ENCODE measurements at regions of chr2 and their contacts with region 1.

Region 1: GRCh38 chr2:70977605-70978205 is 725 bp upstream of the ANKRD53 start:
- DNase-seq: peak; percentile 66
- H3K4me3 Mint-ChIP-seq: peak overlapping the region; percentile 64
- H3K27ac Mint-ChIP-seq: peak overlapping the region; percentile 59
- H3K4me1 Mint-ChIP-seq: peaks cover 13% of the 10 kb centered on the region
- H3K27me3 Mint-ChIP-seq: no peaks in the 10 kb centered on the region

Region 2: DNA sequence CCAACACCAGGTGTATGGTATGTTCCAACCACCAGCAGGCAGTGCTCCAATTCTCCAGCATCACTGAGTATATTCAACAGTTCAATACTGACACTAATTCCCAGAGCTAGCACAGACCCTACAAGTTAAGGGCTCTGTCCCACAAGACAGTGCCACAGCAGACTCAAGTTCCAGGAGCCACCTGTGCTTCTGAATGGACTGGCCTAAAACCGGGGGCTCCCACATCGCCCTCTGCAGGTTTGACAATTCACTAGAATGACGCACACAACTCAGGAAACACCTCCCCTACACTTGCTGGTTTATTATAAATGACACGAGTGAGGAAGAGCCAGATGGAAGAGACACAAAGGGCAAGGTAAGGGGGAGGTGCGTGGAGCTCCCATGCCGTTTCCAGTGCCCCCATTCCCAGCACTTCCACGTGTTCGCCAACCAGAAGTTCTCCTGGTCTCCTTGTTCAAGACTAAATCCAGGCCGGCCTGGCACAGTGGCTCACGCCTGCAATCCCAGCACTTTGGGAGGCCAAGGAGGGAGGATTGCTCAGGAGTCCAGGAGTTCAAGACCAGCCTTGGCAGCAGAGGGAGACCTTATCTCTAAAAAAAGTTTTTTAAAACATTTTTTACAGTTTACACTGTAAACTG is 54.2 kb before region 1 on chr2:
- CTCF ChIA-PET with region 1: no interaction called
- POLR2A ChIA-PET with region 1: no interaction called
- intact Hi-C with region 1: no loop called
- DNase-seq: peak; percentile 39
- H3K4me3 Mint-ChIP-seq: no peak overlapping the region
- H3K27ac Mint-ChIP-seq: no peak overlapping the region
- H3K4me1 Mint-ChIP-seq: no peaks in the 10 kb centered on the region
- H3K27me3 Mint-ChIP-seq: peaks cover 2% of the 10 kb centered on the region

Region 3: DNA sequence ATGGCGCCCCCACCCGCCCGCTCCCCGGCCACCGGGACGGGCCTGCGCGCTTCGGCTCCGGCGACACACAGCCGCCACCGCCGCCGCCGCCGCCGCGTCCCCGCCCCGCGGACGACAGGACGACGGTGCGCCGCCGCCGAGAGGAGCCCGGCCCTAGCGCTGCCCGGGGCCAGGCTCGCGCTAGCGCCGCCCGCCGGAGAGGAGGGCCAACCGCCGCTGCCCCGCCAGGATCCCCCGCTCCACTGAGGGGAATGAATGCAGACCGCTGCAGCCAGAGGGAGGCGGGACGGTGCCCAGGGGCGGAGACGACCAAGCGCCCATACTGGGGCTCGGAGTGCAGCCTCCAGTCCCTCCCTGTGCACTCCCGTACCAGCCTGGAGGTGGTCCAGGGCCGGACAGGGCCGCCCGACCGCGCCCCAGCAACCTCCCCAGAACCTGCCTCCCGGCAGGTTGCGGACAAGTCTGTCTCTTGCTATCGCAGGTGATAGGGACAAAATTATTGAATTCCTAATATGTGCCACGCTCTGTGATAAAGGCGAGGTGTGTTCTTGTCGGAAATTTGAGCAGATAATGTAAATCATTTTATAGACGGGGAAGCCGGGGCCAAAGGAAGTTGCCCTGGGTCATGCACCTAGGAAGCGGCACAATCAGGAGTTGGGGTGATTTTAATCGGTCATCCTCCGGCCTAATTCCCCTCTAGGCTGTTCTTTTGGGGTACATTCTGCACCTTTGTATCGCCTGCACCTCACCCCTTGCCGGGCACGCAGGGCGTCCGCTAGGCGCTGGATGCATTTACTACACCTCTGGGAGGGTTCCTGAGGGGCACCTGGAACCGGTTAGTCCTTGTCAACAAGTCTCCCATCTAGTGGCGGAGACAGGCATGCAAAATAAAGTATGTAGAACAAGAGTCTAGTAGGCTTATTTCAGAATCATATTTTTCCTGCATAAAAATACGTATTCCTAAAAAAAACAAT is 17.3 kb after region 1 on chr2 and contains the start of gene TEX261:
- CTCF ChIA-PET with region 1: interaction called, 53 read pairs
- POLR2A ChIA-PET with region 1: no interaction called
- intact Hi-C with region 1: loop called (anchors 1 kb)
- DNase-seq: peak; percentile 94
- H3K4me3 Mint-ChIP-seq: peak within 1 kb of the TSS; percentile 93
- H3K27ac Mint-ChIP-seq: peak within 1 kb of the TSS; percentile 91
- H3K4me1 Mint-ChIP-seq: peaks cover 31% of the 10 kb centered on the region
- H3K27me3 Mint-ChIP-seq: no peaks in the 10 kb centered on the region
- total RNA-seq, gene TEX261: 29.0 to 29.9 TPM

Region 4: GRCh38 chr2:71000780-71001591 is 23.3 kb after region 1 on chr2:
- CTCF ChIA-PET with region 1: interaction called, 53 read pairs
- POLR2A ChIA-PET with region 1: no interaction called
- intact Hi-C with region 1: no loop called
- DNase-seq: peak; percentile 89
- H3K4me3 Mint-ChIP-seq: peak overlapping the region; percentile 72
- H3K27ac Mint-ChIP-seq: peak overlapping the region; percentile 74
- H3K4me1 Mint-ChIP-seq: peaks cover 7% of the 10 kb centered on the region
- H3K27me3 Mint-ChIP-seq: peaks cover 2% of the 10 kb centered on the region

Region 5: GRCh38 chr2:71043531-71044407 is 66.1 kb after region 1 on chr2:
- CTCF ChIA-PET with region 1: no interaction called
- POLR2A ChIA-PET with region 1: no interaction called
- intact Hi-C with region 1: no loop called
- DNase-seq: peak; percentile 40
- H3K4me3 Mint-ChIP-seq: no peak overlapping the region
- H3K27ac Mint-ChIP-seq: no peak overlapping the region
- H3K4me1 Mint-ChIP-seq: no peaks in the 10 kb centered on the region
- H3K27me3 Mint-ChIP-seq: peaks cover 11% of the 10 kb centered on the region

Region 6: DNA sequence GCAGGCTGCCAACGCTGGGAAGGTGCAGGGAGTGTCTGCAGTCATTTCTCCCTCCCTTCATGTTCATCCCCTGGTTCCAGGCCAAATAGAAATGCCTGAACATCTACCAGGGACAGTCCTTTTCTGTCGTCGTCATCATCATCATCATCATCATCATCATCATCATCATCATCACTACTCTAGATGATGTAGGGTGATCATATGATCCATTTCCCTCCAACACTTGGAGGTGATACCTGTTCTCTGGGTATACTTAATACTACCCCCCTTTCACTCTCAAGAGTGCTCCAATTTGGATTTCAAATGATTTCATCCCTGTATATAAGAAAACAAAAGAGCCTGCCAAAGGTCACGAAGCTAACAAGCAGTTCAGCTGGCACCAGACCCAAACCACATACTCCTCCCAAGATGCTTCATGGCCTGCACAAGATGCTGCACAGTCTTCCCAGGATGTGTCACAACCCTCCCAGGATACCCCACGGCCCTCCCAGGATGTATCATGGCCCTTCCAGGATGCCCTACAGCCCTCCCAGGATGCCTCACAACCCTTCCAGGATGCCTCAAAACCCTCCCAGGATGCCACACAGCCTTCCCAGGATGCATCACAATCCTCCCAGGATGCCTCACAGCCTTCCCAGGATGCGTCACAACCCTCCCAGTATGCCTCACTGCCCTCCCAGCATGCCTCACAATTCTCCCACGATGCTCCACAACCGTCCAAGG is 733.6 kb after region 1 on chr2:
- CTCF ChIA-PET with region 1: no interaction called
- POLR2A ChIA-PET with region 1: no interaction called
- intact Hi-C with region 1: no loop called
- DNase-seq: no peak
- H3K4me3 Mint-ChIP-seq: no peak overlapping the region
- H3K27ac Mint-ChIP-seq: no peak overlapping the region
- H3K4me1 Mint-ChIP-seq: no peaks in the 10 kb centered on the region
- H3K27me3 Mint-ChIP-seq: peaks cover 5% of the 10 kb centered on the region